Posterior cingulate gyrus (tissue), 11 donors: ENCODE measurements at regions of chr15 and their contacts with region 1.

Region 1: DNA sequence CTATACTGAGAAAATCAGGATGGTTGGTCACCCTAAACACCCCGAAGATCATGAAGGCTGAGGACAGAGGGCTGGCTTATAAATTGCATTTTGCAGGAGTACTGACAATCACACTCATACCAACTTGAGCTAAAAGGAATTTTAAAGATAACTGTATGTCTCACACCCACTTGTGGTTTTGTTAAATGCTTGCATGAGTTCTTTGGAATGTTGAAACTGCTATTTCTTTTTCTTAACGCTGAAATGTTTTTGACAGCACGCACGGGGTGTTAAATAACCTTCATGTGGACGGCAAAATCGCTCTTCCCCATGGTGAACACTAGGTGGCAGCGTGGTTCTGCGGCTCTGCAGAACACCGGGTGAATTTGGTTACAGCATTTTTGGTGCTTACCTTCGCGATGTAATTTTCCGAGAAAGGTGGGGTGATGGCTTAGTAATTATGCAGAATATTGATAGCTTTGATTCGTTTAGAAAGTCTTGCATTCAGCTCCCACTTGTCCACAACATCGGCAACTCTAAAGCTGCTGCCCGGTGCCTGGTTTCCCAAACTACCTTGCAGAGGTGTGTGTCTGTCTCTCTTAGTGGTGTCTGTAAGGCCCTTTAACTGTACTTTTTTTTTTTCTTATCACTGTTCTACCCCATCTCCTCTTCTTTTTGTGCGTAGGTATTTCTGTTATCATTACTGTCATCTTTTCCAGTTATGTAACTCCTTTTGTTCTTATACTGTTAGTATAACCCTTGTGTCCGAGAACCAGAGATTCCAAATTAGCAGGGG is 51.7 kb downstream of the ARNT2 start:
- DNase-seq: peak in 7 of 10 donors; percentile 42 to 94 (median 67)

Region 2: DNA sequence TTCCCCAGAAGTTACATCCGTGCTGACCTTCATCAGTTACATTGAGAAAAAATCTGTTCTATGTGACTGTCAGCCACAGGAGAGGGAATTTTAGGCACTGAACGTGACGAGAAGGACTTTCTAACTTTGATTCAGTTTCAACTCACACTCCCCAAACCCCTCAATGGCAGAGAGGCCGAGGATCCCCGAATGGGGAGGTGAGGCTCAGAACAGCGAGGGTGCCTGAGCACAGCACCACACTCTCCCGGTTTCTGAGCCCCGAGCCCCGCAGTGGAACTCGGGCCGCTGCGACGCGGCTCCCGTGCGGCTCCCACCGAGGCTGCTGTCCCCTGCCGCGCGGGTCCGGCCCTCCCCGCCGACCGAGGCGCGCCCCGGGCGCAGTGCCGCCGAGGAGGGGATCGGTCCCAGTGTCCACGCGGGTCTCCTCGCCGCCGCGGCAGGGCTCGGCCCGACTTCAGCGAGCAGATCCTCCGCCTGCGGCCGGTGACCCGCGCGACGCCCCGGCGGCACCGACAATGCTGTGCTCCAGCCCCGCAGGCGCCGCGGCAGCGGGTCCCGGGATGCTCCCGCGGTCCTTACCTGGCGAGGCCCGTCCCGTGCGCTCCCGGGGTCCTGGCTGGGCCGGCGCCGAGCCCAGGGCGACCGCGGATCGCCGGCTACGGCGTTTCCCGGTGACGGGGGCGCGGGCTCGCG is 204.3 kb before region 1 on chr15:
- intact Hi-C with region 1: no loop called
- DNase-seq: peak in 3 of 10 donors; percentile 11 to 79 (median 14)

Region 3: DNA sequence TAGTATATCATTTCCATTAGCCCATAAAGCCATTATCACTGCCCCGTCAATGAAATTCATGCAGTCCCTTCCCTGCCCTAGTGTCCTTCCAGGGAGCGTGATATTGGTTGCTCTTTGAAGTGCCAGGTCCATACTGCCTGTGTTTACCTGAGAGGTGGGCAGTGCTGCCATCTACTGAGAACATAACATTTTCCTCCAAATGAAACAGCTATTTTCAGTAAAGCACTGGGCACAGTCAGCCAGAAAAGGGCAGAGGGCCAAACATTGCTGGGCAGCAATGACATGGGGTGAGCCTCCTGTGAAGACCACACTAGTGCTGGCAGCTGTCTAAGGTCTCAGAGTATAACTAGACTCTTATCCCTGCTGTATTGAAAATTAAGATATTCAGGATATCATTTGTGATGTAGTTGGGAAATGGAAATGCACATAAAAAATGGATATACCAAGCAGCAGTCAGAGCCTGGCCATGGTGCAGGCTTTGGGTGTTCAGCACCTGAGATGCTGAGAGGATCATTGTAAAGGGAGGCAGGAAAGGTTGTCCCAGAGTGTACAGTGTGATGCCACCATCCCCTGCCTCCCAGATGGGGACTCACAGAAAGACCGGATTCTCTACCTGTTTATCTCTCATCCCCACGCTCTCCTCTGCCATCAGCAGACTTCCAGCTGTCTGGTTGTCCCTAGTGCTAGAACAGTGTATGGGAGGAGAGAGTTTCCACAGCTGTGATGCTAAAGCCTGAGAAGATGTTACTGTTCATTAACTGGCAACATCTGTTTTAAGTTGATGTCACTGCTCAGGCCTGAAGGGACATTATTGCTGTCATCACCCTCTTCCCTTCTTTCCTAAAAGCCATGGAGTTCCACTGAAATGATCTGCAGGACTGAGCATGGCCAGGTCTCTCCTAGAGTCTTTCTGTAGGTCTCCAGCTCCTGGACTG is 57.1 kb after region 1 on chr15:
- intact Hi-C with region 1: loop called (anchors 5 kb)
- DNase-seq: peak in 1 of 10 donors; percentile 30

Region 4: DNA sequence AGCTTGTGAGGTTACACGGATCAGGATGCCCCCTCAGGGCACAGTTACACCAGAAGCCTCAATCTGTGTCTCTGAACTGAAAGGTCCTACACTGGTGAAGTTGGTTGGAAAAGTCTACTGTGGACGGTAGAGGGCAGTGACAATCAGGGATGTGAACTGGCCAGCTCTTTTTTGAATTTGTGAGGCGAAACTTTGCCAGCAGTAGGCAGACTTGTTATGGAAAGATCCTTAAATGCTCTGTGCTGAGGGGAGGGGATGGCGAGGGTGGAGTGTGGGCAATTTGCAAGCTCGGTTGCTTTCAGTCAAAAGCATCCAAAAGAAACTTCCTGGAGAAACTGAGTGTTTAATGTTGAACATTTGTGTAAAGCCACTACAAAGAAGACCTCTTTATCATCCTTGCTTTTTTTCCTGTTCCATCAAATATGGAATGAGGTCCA is 111.9 kb after region 1 on chr15:
- intact Hi-C with region 1: loop called (anchors 5 kb)
- DNase-seq: peak; percentile 27 to 94 (median 50)

Region 5: DNA sequence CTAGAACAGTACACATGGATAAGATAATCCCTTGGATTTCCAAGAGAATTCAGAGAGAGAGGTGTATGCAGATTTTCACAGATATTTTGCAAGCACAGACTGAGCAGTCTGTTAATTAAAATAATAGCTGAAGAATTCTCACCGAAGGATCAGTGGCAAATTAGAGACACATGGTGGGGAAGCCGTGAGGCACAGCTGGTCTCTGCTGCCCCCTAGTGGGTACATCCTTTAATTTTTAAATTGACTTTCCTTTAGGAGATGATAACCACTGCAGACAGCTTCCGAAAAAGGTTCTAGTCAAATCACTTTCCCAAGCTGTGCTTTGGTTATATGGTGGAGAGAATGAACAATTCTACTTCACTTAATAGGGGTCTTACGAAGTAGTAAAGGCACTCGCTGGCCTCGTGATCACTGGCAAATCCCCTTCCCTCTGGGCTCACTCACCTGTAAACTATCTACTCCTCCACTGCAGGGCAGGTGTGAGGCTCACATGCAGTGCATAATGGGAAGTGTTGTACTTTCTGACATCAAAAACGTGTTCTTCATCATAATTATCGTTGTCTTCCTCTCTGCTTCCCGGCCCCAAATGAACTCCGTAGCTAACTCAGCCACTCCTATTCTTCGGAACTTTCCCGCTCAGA is 514.3 kb after region 1 on chr15:
- intact Hi-C with region 1: loop called (anchors 2 kb)
- DNase-seq: peak in 8 of 10 donors; percentile 39 to 92 (median 66)